ENCODE measurements at regions of chr5 and their contacts with region 1.

Region 1: GRCh38 chr5:82351754-82352145 is 73.6 kb upstream of the RPS23 start:
- DNase-seq: peak in 7 of 9 donors; percentile 8 to 54 (median 46)
- ATAC-seq: peak; percentile 73
- H3K4me3 ChIP-seq: no peak overlapping the region
- H3K4me3 Mint-ChIP-seq: no peak overlapping the region
- H3K27ac ChIP-seq: no peak overlapping the region
- H3K27ac Mint-ChIP-seq: peak overlapping the region in 1 of 9 donors; percentile 24
- H3K4me1 ChIP-seq: peaks cover 5 to 6% of the 10 kb centered on the region in 2 donors
- H3K4me1 Mint-ChIP-seq: peaks cover 3 to 58% (median 3%) of the 10 kb centered on the region in 7 donors
- H3K27me3 ChIP-seq: no peaks in the 10 kb centered on the region
- H3K27me3 Mint-ChIP-seq: no peaks in the 10 kb centered on the region

Region 2: DNA sequence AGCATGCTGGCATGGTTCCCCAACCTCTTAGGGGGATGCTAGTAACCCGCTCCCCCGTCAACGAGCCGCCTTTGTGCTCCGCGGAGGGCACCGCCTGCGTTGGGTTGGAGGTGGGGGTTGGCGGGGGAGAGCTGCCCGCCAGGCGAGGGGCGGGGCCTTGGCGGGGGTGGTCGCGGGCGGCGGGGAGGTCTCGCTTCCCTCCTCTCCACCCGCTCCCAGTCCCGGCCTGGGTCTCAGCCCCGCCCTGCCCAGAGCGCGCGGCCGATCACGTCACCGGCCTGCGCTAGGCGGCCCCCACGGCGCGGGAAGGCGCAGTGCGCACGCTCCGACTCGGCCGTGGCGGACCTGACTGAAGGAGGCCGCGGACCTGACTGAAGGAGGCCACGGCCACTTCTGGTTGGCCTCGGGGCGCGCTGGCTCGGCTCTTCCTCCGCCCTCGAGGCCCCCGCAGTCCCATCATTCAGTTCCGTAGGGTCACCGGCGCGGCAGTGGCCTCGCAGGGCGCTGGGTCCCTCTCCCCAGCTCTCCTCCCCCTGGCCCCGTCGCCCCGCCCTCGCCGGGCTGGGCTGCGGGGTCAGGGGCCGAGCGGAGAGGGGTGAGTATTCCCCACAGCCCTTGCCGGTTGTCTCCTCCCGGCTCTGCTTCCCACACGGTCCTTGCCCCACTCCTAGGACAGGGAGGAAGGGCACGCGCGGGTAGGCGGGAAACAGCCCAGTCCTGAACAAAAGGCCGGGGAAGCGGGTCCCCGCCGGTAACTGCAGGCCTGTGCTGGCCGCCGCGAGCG is 379.8 kb before region 1 on chr5 and contains the start of gene ATG10:
- CTCF ChIA-PET with region 1: no interaction called
- POLR2A ChIA-PET with region 1: no interaction called
- intact Hi-C with region 1: loop called in 1 of 2 experiments (anchors 10 kb)
- DNase-seq: peak; percentile 78 to 93 (median 84)
- ATAC-seq: peak; percentile 95
- H3K4me3 ChIP-seq: peak within 1 kb of the TSS; percentile 67
- H3K4me3 Mint-ChIP-seq: peak within 1 kb of the TSS; percentile 91 to 100 (median 97)
- H3K27ac ChIP-seq: peak within 1 kb of the TSS; percentile 97
- H3K27ac Mint-ChIP-seq: peak within 1 kb of the TSS; percentile 95 to 99 (median 99)
- H3K4me1 ChIP-seq: peaks cover 5 to 10% of the 10 kb centered on the region in 2 donors
- H3K4me1 Mint-ChIP-seq: peaks cover 9 to 40% (median 33%) of the 10 kb centered on the region in 7 donors
- H3K27me3 ChIP-seq: no peaks in the 10 kb centered on the region
- H3K27me3 Mint-ChIP-seq: no peaks in the 10 kb centered on the region
- total RNA-seq, gene ATG10: 6.4 to 9.6 (median 8.2) TPM

Region 3: GRCh38 chr5:82494942-82495341 is 143.2 kb after region 1 on chr5:
- CTCF ChIA-PET with region 1: no interaction called
- POLR2A ChIA-PET with region 1: interaction called, 3 read pairs
- intact Hi-C with region 1: loop called (anchors 2 kb)
- DNase-seq: no peak
- ATAC-seq: no peak
- H3K4me3 ChIP-seq: no peak overlapping the region
- H3K4me3 Mint-ChIP-seq: no peak overlapping the region
- H3K27ac ChIP-seq: no peak overlapping the region
- H3K27ac Mint-ChIP-seq: no peak overlapping the region
- H3K4me1 ChIP-seq: no peaks in the 10 kb centered on the region
- H3K4me1 Mint-ChIP-seq: peaks cover 0 to 5% (median 0%) of the 10 kb centered on the region in 7 donors
- H3K27me3 ChIP-seq: no peaks in the 10 kb centered on the region
- H3K27me3 Mint-ChIP-seq: peaks cover 5 to 17% (median 8%) of the 10 kb centered on the region in 5 donors

Region 4: DNA sequence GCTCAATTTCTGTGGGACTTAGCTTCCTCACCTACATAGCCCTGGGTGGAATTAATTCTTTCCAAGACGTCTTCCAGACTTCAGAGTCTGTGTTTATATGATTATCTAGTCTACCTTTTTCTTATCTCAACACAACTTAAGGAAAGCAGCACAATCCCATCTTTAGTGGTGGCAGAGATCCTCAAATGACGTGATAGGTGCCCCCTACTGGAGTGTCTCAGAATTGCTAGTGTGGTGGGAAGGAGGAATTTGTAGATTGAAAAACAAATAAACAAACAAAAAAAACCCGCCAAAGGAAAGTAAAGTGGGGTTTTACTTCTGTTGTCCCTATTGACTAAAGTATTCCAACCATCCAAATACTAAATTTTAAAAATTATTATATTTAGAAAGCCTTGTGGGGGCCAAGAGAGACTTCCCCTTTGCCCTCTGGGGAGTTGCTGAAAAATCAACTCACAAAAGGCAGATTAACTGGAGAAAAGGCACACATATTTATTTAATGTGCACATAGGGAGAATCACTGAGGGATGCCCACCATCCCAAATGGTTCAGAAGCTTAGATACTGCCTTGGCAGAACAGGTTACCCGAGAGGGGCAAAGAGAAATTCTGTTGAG is 442.2 kb after region 1 on chr5:
- CTCF ChIA-PET with region 1: no interaction called
- POLR2A ChIA-PET with region 1: no interaction called
- intact Hi-C with region 1: loop called (anchors 1 kb)
- DNase-seq: peak in 6 of 9 donors; percentile 14 to 31 (median 22)
- ATAC-seq: no peak
- H3K4me3 ChIP-seq: no peak overlapping the region
- H3K4me3 Mint-ChIP-seq: no peak overlapping the region
- H3K27ac ChIP-seq: no peak overlapping the region
- H3K27ac Mint-ChIP-seq: no peak overlapping the region
- H3K4me1 ChIP-seq: no peaks in the 10 kb centered on the region
- H3K4me1 Mint-ChIP-seq: peaks cover 0 to 5% (median 0%) of the 10 kb centered on the region in 7 donors
- H3K27me3 ChIP-seq: no peaks in the 10 kb centered on the region
- H3K27me3 Mint-ChIP-seq: peaks cover 0 to 12% (median 3%) of the 10 kb centered on the region in 5 donors

Region 5: DNA sequence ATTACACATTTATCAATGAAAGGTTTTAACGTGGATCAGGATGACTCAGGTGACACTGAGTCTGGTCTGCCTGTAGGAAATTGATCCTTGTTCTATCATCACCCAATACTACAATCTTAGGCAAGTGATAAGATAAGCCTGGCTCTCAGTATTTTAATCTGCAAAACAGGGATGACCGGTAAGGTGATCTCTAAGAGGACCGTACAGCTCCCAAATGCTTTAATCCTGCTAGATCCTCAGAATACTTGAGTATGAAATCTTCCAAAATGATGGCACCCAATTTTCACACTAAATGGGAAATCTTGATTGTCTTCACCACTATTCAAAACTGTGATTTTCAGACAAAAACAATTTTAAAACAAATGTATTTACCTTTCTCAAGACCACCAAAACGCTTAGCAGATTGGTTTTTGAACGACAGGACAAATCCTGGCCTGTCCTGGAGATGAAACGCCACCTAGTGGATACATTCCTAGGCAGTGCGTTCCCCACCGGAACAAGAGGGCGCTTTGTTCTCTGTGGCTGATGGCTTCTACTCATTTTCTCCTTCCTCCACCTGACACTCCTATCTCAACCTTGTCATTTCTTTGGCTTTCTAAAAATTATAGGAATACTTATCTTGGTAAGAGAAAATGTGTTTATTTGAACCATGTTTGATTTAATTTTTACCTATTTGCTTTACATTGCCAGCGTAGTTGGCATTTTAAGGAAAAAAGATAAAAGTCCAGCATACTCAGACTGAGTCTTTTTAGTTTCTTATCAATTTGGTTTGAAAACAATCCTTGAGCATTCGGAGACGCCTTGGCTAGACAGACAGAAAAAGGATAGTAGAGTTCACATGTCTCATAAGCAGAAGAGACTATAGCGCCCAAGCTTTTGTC is 1078.6 kb after region 1 on chr5:
- CTCF ChIA-PET with region 1: interaction called, 14 read pairs
- POLR2A ChIA-PET with region 1: no interaction called
- intact Hi-C with region 1: loop called (anchors 1 kb)
- DNase-seq: peak in 8 of 9 donors; percentile 8 to 52 (median 38)
- ATAC-seq: peak; percentile 79
- H3K4me3 ChIP-seq: no peak overlapping the region
- H3K4me3 Mint-ChIP-seq: no peak overlapping the region
- H3K27ac ChIP-seq: no peak overlapping the region
- H3K27ac Mint-ChIP-seq: no peak overlapping the region
- H3K4me1 ChIP-seq: no peaks in the 10 kb centered on the region
- H3K4me1 Mint-ChIP-seq: peaks cover 0 to 2% (median 0%) of the 10 kb centered on the region in 7 donors
- H3K27me3 ChIP-seq: no peaks in the 10 kb centered on the region
- H3K27me3 Mint-ChIP-seq: peaks cover 0 to 4% (median 0%) of the 10 kb centered on the region in 5 donors

Measured in naive thymus-derived CD4-positive, alpha-beta T cell (primary cell).